Activated T-helper 1 cell treated with anti-CD3 and anti-CD28 coated beads, Interleukin-12 subunit alpha, Interleukin-12 subunit beta, Interleukin-2, Interleukin-4 antibody, amounts not matched to agents 30 ng/mL and 10 ng/mL and 1 ng/mL, durations not matched to agents 14 hours and 24 hours and 36 hours (primary cell): ENCODE measurements at regions of chr1 and their contacts with region 1.

Region 1: GRCh38 chr1:24642481-24643361 is at the start of gene SRRM1:
- DNase-seq: peak; percentile 98
- H3K4me3 Mint-ChIP-seq: peak within 1 kb of the TSS; percentile 94
- H3K27ac Mint-ChIP-seq: peak within 1 kb of the TSS; percentile 96
- H3K4me1 Mint-ChIP-seq: peaks cover 43% of the 10 kb centered on the region
- H3K27me3 Mint-ChIP-seq: no peaks in the 10 kb centered on the region
- total RNA-seq, gene SRRM1: 218 and 242 TPM in 2 replicates

Region 2: DNA sequence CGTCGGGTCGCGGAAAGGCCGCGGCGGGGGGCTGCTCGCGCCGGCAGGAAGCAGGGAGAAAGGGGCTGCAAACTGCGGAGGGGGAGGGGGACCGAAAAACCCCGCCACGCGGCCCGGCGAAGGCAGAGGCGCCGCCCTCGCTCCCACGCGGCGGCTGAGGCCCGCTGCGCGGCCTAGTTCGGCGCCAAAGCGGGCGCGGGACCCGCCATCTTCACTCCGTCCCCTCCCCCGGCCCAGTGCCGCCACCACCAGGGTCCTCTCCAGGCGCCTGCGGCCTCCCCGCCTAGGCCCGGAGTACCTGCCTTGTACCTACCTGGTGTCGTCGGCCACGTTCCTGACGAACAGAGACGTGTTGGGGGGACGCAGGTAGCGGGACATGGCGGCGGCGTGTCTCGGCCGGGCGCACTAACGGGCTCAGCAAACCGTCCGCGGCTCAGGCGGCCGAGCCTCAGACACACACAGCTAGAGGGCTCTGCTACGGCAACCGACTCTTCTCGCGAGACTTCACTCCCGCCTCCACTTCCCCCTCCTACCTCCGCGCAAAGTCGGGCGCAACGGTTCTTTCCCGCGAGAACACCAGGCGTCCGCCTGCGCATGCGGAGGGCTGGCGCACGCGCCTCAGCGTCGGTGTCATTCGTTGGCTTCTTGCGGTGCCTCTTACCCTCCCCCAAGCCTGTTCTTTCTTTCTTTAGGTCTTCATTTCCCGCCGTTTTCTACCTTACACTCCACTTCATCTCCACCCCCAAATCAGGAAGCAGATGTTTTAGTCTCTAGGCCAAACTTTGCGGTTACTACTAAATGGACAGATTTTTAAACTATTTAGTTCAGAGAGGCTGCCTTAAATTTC is 662.6 kb before region 1 on chr1 and contains the start of gene SRSF10:
- intact Hi-C with region 1: loop called (anchors 10 kb)
- DNase-seq: peak; percentile 98
- H3K4me3 Mint-ChIP-seq: peak within 1 kb of the TSS; percentile 97
- H3K27ac Mint-ChIP-seq: peak within 1 kb of the TSS; percentile 97
- H3K4me1 Mint-ChIP-seq: peaks cover 47% of the 10 kb centered on the region
- H3K27me3 Mint-ChIP-seq: no peaks in the 10 kb centered on the region
- total RNA-seq, gene SRSF10: 238 and 243 TPM in 2 replicates

Region 3: GRCh38 chr1:24415334-24415909 is 227.3 kb before region 1 on chr1 and contains the start of gene NIPAL3:
- intact Hi-C with region 1: loop called (anchors 1 kb)
- DNase-seq: peak; percentile 97
- H3K4me3 Mint-ChIP-seq: peak within 1 kb of the TSS; percentile 97
- H3K27ac Mint-ChIP-seq: peak within 1 kb of the TSS; percentile 78
- H3K4me1 Mint-ChIP-seq: peaks cover 51% of the 10 kb centered on the region
- H3K27me3 Mint-ChIP-seq: no peaks in the 10 kb centered on the region
- total RNA-seq, gene NIPAL3: 22.7 and 23.5 TPM in 2 replicates

Region 4: DNA sequence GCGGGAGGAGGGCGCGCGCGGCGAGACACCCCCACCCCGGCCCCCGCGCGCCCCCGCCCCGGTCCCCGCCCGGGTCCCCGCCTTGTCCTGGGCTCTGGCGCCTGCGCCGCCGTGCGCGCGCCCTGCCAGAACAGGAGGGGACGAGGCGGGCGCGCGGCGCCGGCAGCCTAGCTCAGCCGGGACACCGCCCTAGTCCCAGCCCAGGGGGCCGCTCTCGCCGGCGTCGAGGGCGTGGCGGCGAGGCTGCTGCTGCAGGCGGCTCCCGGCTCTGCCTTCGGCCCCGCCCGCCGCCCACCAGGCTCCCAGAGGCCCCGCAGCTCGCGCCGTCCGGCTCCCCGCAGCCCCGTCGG is 140.0 kb before region 1 on chr1 and contains the start of gene RCAN3:
- intact Hi-C with region 1: loop called (anchors 1 kb)
- DNase-seq: peak; percentile 91
- H3K4me3 Mint-ChIP-seq: peak within 1 kb of the TSS; percentile 97
- H3K27ac Mint-ChIP-seq: peak within 1 kb of the TSS; percentile 94
- H3K4me1 Mint-ChIP-seq: peaks cover 64% of the 10 kb centered on the region
- H3K27me3 Mint-ChIP-seq: no peaks in the 10 kb centered on the region
- total RNA-seq, gene RCAN3: 26.5 and 26.8 TPM in 2 replicates

Region 5: DNA sequence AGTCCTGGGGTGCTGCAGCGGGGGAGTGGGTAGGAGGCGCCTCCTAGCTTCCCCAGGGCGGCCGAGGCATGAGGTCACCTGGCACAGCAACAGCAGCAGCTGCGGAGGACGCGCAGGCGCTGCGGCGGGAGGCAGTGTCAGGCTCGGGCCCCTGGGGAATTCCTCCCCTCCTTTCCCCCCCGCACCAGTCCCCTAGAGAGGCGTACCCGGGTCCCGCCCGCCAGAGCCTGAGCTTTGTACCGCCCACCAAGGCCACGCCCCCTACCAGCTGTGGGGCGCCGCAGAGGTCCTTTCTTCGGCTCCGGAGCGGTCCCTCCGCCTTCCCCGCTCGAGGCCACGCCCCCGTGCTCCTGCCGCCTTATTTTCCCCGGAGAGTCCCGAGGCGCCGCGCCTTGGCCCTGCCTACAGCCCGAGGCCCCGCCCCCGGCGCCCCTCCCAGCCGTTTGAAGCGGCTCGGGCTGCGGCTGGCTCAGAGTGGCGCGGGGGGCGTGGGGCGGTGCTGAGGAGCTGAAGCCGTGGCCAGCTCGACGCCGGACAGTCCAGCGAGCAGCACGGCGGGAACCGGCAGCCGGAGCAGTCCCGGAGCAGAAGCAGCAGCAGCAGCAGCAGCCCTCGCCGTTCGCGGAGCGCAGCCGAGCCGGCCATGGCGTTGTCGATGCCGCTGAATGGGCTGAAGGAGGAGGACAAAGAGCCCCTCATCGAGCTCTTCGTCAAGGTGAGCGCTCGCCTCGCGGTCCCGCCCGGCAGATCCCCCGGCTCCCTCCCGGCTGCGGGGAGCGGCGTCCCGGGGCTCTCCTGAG is 102.4 kb after region 1 on chr1 and contains the start of gene CLIC4:
- intact Hi-C with region 1: loop called (anchors 1 kb)
- DNase-seq: peak; percentile 100
- H3K4me3 Mint-ChIP-seq: peak within 1 kb of the TSS; percentile 93
- H3K27ac Mint-ChIP-seq: peak within 1 kb of the TSS; percentile 91
- H3K4me1 Mint-ChIP-seq: peaks cover 56% of the 10 kb centered on the region
- H3K27me3 Mint-ChIP-seq: peaks cover 2% of the 10 kb centered on the region
- total RNA-seq, gene CLIC4: 16.8 and 20.6 TPM in 2 replicates

Region 6: DNA sequence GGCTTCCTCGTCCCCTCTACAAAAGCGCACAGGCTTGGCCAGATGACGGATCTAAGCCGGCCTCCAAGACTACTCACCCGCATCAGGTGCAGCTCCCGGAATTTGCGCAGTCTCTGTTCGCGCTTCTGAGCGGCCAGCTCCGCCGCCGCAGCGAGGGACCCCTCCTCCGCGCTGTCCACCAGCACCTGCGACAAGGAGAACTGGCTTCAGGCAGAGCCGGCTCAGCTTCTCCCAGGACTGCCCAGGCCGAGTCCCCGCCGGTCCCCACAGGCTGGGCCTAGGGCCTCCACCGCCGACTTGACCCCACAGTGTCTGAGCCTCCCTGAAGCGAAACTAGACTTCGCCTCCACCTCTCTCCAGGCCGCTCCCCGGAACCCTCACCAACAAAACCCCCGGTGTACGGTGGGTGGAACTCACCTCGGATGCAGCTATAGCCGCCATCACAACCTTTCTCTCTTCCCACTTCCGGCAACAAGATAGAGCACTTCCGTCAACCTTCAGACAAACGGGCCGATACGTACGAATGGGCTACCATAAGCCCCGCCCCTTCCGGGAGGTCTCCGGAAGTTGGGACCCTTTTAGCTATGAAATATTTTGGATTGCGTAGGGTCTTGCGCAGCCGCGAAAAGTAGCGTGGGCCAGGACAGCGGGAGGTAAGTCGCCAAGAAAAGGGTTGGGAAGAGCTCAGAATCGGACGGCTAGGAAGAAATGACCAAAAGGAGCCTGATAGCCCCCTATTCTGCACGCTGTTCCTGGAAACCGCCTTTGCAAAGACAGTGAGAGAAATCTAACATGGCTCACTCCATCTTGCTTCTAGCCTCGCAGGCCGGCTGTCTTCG is 589.5 kb after region 1 on chr1 and contains the start of gene SYF2:
- intact Hi-C with region 1: loop called (anchors 1 kb)
- DNase-seq: peak; percentile 83
- H3K4me3 Mint-ChIP-seq: no peak within 1 kb of the TSS
- H3K27ac Mint-ChIP-seq: no peak within 1 kb of the TSS
- H3K4me1 Mint-ChIP-seq: peaks cover 32% of the 10 kb centered on the region
- H3K27me3 Mint-ChIP-seq: no peaks in the 10 kb centered on the region
- total RNA-seq, gene SYF2: 40.7 and 41.4 TPM in 2 replicates